A549 (cell line): ENCODE measurements at regions of chr9 and their contacts with region 1.

Region 1: DNA sequence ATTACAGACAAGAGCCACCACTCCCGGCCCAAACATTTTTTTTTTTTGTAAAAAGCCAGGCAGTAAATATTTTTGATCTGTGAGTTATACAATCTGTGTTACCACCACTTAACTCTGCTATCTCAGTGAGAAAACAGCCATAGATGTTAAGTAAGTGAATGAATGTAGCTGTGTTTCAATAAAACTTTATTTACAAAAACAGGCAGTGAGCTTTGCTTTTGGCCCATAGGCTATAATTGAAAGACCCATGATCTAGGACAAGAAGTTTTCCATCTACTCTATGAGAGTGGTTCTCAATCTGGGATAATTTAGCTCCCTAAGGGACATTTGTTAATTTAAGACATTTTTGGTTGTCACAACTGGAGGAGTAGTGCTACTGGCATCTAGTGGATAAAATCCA is 91.0 kb downstream of the TMC1 start:
- DNase-seq: no peak
- ATAC-seq: no peak
- H3K4me3 ChIP-seq: no peak overlapping the region
- H3K27ac ChIP-seq: no peak overlapping the region
- H3K4me1 ChIP-seq: no peaks in the 10 kb centered on the region
- CTCF ChIP-seq: no peak
- EP300 ChIP-seq: no peak
- POLR2A ChIP-seq: no peak
- RAD21 ChIP-seq: no peak

Region 2: GRCh38 chr9:72623156-72623555 is 10.7 kb after region 1 on chr9:
- CTCF ChIA-PET with region 1: interaction called, 10 read pairs
- POLR2A ChIA-PET with region 1: no interaction called
- DNase-seq: no peak
- ATAC-seq: no peak
- H3K4me3 ChIP-seq: no peak overlapping the region
- H3K27ac ChIP-seq: no peak overlapping the region
- H3K4me1 ChIP-seq: no peaks in the 10 kb centered on the region
- CTCF ChIP-seq: no peak
- EP300 ChIP-seq: no peak
- POLR2A ChIP-seq: no peak
- RAD21 ChIP-seq: no peak